Activated CD8-positive, alpha-beta memory T cell treated with anti-CD3 and anti-CD28 coated beads, Interleukin-2, amount 10 ng/mL, durations not matched to agents 7 days and 5 days (primary cell): ENCODE measurements at regions of chr12 and their contacts with region 1.

Region 1: DNA sequence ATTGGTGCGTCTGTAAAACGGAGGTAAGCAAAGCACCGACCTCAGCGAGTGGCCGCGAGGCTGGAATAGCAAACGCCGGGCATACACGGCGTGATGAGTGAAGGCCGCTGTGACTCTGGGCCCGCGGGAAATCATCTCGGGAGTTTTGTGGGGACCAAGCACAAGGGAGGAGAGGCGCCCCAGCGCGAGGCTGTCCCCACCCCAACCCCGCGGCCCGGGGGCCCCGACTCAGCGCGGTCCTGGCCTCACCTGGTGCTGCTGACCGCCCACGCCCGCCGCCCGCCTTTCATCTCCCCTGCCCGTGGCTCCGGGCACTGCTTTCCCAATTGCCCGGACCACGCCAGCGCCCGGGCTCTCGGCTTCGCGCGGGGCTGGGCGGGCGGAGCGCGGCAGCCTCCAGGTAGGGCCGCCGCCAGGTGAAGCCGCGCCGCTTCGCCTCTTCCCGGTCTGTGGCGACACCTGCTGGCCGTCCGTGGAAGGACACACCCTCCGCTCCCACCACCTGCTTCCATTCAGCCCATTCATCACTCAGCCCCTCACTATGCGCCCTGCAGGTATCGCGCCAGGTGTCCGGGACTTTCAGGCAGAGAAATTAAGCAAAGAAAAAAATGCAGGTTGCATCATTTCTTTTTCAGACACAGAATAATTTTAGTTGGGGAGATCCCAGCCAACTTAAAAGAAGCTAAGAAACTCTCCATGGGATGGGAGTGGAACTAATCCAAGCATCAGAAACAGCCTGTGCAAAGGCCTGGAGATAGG is 360.4 kb downstream of the MED13L start:
- DNase-seq: peak; percentile 72
- ATAC-seq: peak; percentile 78
- H3K4me3 Mint-ChIP-seq: no peak overlapping the region
- H3K27ac Mint-ChIP-seq: no peak overlapping the region
- H3K4me1 Mint-ChIP-seq: peaks cover 1% of the 10 kb centered on the region
- H3K27me3 Mint-ChIP-seq: peaks cover 53% of the 10 kb centered on the region

Region 2: GRCh38 chr12:114662512-114663177 is 1254.4 kb before region 1 on chr12:
- CTCF ChIA-PET with region 1: interaction called, 10 read pairs
- DNase-seq: peak; percentile 72
- ATAC-seq: no peak
- H3K4me3 Mint-ChIP-seq: no peak overlapping the region
- H3K27ac Mint-ChIP-seq: no peak overlapping the region
- H3K4me1 Mint-ChIP-seq: peaks cover 2% of the 10 kb centered on the region
- H3K27me3 Mint-ChIP-seq: peaks cover 50% of the 10 kb centered on the region

Region 3: GRCh38 chr12:115840159-115840558 is 76.9 kb before region 1 on chr12:
- CTCF ChIA-PET with region 1: no interaction called
- DNase-seq: no peak
- ATAC-seq: no peak
- H3K4me3 Mint-ChIP-seq: no peak overlapping the region
- H3K27ac Mint-ChIP-seq: no peak overlapping the region
- H3K4me1 Mint-ChIP-seq: no peaks in the 10 kb centered on the region
- H3K27me3 Mint-ChIP-seq: no peaks in the 10 kb centered on the region

Region 4: GRCh38 chr12:115946867-115947696 is 30.0 kb after region 1 on chr12:
- CTCF ChIA-PET with region 1: interaction called, 10 read pairs
- DNase-seq: no peak
- ATAC-seq: no peak
- H3K4me3 Mint-ChIP-seq: no peak overlapping the region
- H3K27ac Mint-ChIP-seq: no peak overlapping the region
- H3K4me1 Mint-ChIP-seq: no peaks in the 10 kb centered on the region
- H3K27me3 Mint-ChIP-seq: no peaks in the 10 kb centered on the region